ENCODE measurements at regions of chr11 and their contacts with region 1.

Region 1: GRCh38 chr11:126800009-126800408 is 200.6 kb downstream of the KIRREL3 start:
- DNase-seq: no peak
- H3K4me3 ChIP-seq: no peak overlapping the region
- H3K27ac ChIP-seq: no peak overlapping the region
- H3K4me1 ChIP-seq: no peaks in the 10 kb centered on the region
- H3K27me3 ChIP-seq: peaks cover 22% of the 10 kb centered on the region
- CTCF ChIP-seq: no peak

Region 2: DNA sequence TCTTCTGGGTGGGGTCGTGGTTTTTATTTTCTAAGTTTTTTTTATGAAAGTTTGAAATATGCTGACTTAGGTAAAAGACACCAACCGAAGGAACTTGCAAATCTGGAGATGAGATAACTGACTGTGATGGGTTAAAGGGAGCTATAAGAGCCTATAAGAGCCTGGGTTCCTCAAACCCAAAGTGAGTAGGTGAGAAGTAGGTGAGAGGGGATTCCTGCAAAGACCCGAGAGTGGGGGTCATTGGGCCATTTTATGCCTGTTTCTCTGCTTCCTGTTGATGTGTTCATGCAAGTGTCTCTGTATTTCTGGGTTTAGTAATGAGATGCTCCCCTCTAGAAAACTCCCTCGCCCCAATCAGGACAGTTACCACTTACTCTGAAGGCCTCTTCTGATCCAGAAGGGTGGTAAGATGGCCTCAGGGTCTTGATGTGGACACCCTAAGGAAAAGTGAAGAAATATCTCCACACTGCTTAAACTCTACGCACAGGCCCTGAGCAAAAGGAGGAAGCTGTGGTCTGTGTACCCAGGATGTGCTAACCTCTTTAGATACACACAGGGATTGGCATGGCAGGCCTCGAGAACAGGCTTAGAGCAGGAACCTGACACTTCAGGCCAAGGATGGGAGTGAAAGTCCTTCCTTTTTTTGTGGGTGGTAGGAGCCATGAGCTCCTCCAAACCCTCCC is 1895.7 kb after region 1 on chr11:
- CTCF ChIA-PET with region 1: no interaction called
- POLR2A ChIA-PET with region 1: interaction called, 18 read pairs
- intact Hi-C with region 1: no loop called
- DNase-seq: no peak
- H3K4me3 ChIP-seq: no peak overlapping the region
- H3K27ac ChIP-seq: no peak overlapping the region
- H3K4me1 ChIP-seq: peaks cover 10% of the 10 kb centered on the region
- H3K27me3 ChIP-seq: peaks cover 86% of the 10 kb centered on the region
- CTCF ChIP-seq: no peak

Measured in A673 (cell line).